ENCODE measurements at regions of chr2 and their contacts with region 1.

Region 1: DNA sequence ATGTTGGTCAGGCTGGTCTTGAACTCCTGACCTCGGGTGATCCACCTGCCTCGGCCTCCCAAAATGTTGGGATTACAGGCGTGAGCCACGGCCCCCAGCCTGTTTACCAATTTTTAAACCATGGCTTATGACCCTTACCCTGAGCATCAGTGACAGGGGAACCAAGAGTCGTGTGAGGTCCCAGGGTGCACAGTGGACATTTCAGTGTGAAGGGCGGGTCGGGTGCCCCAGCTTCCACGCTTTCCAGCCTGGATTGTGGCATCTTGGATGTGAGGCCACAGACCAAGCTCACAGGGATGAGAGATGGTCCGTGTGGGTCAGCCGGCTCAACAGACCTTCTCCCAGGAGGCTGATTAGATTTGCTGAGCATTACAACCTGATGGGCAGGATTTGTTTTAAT is 202.4 kb downstream of the AGAP1 start:
- DNase-seq: peak in 1 of 2 donors; percentile 46
- H3K4me3 ChIP-seq: no peak overlapping the region
- CTCF ChIP-seq: no peak
- POLR2A ChIP-seq: no peak

Region 2: DNA sequence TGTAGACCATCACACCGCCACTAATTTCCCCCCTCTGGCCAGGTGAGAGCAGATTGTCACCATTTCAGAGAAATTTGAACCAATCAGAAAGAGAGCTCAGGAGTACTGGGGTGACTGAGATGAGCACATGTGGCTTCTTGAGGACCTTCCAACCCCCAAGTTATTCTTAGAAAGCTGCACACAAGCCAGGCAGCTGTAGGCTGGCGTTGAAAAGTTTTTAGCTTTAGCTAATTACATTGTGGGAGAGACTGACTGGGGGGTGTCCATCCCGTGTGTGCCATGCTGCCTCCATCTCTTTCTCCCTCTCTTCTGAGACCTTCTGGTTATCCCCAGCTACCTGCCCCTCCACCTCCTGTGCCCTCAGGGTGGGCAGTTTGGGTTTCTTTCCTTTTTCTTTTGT is 48.4 kb before region 1 on chr2:
- intact Hi-C with region 1: loop called (anchors 2 kb)
- DNase-seq: no peak
- H3K4me3 ChIP-seq: no peak overlapping the region
- CTCF ChIP-seq: no peak
- POLR2A ChIP-seq: no peak

Region 3: GRCh38 chr2:236691799-236692167 is 995.5 kb after region 1 on chr2:
- intact Hi-C with region 1: no loop called
- DNase-seq: no peak
- H3K4me3 ChIP-seq: no peak overlapping the region
- CTCF ChIP-seq: no peak
- POLR2A ChIP-seq: no peak

Measured in lower leg skin (tissue), 4 donors.